Heart right ventricle (tissue), 16 donors: ENCODE measurements at regions of chr6 and their contacts with region 1.

Region 1: DNA sequence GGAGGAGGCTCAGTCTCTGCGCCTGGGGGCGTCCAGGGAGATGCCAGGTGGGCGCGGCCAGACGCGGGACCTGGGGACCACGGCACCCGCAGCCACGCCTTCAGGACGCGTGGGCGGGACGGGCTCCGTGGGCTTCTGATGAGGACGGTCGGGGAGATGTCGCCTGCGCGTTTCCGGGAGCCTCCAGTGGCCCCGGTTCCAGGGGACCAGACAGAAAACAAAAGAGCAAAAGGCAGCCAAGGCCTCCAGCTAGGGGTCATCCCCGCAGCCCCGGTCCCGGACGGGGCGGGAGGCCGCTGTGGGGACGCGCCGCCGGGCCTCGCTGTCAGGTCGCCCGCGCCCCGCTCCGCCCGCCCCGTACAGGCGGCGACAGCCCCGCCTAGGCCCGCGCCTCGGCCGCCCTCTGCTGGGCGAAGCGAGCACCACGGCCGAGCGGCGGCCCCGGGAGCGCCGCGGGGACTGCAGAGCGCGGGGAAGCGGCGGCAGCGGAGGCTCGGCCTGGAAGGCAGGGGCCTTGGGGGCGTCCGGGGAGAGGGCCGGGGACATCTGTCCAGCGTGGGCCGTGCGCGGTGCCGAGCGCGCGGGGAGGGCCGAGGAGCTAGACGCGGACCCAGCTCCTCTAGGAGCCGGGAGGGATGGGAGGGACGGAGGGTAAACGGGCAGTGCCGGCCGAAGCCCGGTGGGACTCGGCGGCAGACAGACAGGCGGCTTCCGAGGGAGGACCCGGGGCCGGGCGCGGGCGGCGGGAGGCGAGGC is 48.7 kb downstream of the TMEM242 start:
- DNase-seq: peak; percentile 72 to 80
- ATAC-seq: peak; percentile 88 to 96 (median 96)
- H3K4me3 ChIP-seq: peak overlapping the region; percentile 46 to 72 (median 67)
- H3K27ac ChIP-seq: peak overlapping the region; percentile 58 to 89 (median 83)
- H3K4me1 ChIP-seq: peaks cover 0 to 37% (median 7%) of the 10 kb centered on the region in 9 donors
- H3K27me3 ChIP-seq: no peaks in the 10 kb centered on the region
- CTCF ChIP-seq: peak; percentile 55 to 95 (median 90)

Region 2: DNA sequence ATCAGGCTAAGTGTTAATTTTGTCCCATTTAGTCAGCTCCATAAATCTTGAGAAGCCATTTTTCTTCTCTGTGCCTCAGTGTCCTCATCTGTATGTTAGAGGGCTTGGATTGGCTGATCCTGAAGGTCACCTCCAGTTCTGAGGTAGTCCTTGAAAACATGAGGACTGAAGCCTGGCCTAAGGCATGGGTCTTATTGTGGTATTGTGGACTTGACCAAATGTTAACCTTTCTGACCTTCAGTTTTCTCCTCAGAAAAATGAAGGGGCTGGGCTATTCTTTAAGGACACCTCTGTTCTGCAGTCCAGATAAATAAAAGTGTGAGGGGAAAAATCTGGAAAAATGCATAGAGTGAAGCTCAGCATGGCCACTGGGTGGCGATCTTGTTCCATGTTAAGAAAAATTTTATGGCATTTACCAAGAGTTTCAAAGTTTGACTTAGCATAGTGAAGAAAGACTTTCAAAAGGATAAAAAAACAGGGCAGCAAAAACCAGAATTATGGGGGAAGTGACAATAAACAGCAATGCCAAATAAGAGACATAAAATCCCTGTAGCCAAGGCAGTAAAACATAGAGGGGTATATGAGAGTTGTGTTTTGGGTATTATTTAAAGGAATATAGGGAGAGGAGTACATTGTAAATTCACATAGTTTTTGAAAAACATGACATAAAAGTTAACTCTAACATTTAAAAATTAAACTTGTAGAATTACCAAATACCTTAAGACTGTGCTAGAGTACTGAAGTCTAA is 1947.1 kb before region 1 on chr6:
- intact Hi-C with region 1: loop called in 1 of 10 experiments (anchors 10 kb)
- DNase-seq: peak; percentile 34 to 46
- ATAC-seq: peak in 6 of 8 donors; percentile 38 to 66 (median 60)
- H3K4me3 ChIP-seq: no peak overlapping the region
- H3K27ac ChIP-seq: no peak overlapping the region
- H3K4me1 ChIP-seq: no peaks in the 10 kb centered on the region
- H3K27me3 ChIP-seq: no peaks in the 10 kb centered on the region
- CTCF ChIP-seq: peak; percentile 63 to 89 (median 82)

Region 3: DNA sequence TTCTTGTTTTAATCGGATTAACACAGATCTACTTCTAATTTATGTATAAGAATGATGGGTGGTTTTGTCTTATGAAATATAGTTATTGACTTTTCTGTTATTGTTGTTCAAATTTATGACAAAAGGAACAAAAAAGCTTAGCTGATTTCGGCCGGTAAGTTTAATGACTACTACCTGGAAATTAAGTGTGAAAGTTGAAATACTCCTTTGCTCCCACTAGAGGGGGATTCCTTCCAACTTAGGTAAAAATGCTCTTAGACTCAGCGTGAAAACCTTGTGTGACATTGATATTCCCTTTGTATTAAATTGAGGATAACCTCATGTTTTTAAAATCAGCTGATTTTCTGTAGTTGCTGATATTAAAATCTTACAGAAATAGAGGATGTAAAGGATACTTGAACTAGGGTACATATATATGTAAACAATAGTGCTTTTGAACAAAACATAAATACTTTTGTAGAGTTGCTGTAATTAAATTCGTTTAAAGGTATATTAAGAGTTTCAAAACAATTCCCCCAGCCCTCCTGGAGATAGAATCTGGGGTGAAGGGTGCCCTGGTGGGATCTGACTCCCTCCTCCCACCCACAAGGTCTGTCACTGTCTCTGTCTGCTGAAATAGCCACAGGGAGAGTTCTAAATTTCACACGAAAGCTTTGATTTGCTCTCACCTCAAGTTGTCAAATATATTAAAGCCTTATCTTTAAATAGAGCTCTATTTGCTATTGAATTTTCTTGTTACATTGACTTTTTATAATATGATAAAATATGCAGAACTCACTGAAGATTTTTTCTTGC is 240.0 kb before region 1 on chr6:
- intact Hi-C with region 1: loop called in 7 of 10 experiments (anchors 5 to 10 kb)
- DNase-seq: no peak
- ATAC-seq: peak in 5 of 8 donors; percentile 55 to 76 (median 67)
- H3K4me3 ChIP-seq: no peak overlapping the region
- H3K27ac ChIP-seq: peak overlapping the region in 4 of 10 donors; percentile 29 to 86 (median 72)
- H3K4me1 ChIP-seq: peaks cover 0 to 52% (median 44%) of the 10 kb centered on the region in 9 donors
- H3K27me3 ChIP-seq: no peaks in the 10 kb centered on the region
- CTCF ChIP-seq: peak; percentile 37 to 76 (median 65)

Region 4: DNA sequence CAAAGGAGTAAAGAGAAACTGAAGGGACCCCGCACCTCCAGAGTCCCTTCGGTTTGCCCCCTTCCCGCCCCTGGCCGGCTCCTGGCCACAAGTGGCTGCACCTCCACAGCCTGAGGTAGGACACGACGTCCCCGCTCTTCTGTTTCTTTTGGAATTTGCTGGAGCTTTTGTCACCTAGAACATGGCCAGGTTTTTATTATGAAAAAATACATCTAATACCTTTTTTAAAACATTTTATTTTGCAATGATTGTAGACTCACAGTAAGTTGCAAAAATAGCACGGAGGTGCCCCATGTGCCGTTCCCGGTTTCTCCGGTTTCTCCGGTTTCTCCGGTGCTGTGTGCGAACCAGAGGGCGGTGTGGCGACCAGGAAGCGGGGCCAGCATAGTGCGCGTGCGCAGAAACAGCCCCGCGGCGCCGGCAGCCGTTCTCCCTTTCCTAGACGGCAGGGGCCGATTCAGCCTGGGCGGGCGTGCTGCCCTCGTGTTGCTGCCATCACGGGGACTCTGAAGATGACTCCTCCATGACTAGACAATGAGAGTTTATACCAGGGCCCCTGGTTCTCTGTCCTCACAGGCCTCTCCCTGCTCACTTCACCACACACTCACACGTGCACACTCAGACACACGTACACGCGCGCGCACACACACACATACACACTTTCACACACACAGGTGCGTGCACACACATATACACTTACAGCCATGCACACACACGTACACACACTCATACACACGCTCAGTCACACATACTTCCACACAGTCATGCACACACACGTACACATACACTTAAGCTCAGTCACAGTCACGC is 53.4 kb before region 1 on chr6:
- intact Hi-C with region 1: loop called in 6 of 10 experiments (anchors 2 to 10 kb)
- DNase-seq: peak; percentile 73 to 85
- ATAC-seq: peak; percentile 69 to 86 (median 80)
- H3K4me3 ChIP-seq: peak overlapping the region in 9 of 10 donors; percentile 20 to 60 (median 50)
- H3K27ac ChIP-seq: peak overlapping the region in 4 of 10 donors; percentile 8 to 39 (median 26)
- H3K4me1 ChIP-seq: peaks cover 0 to 34% (median 17%) of the 10 kb centered on the region in 9 donors
- H3K27me3 ChIP-seq: no peaks in the 10 kb centered on the region
- CTCF ChIP-seq: peak in 6 of 9 donors; percentile 6 to 61 (median 37)

Region 5: DNA sequence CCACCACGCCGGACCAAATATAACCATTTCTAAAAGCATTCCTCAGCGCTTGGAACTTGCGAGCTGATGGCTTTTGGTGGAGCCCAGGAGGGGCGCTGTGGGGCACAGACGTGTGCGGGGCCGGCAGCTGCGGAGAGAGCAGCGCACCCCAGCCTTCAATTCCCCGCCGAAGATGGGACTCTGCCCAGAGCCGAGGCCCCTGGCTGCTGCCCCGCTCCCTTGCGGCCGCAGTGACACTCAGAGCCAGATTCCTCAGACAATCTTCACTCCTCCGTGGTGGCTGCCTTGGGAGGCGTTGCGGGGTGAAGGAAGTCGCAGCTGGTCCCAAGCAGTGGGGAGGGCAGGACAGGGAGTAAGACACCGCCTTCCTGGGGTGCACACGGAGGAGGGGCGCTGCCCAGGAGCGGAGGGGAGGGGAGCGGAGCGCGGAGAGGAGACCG is 39.0 kb before region 1 on chr6:
- intact Hi-C with region 1: loop called in 4 of 10 experiments (anchors 1 to 5 kb)
- DNase-seq: peak; percentile 58 to 59
- ATAC-seq: peak; percentile 74 to 91 (median 78)
- H3K4me3 ChIP-seq: peak overlapping the region; percentile 41 to 64 (median 59)
- H3K27ac ChIP-seq: peak overlapping the region in 9 of 10 donors; percentile 18 to 65 (median 40)
- H3K4me1 ChIP-seq: peaks cover 3 to 37% (median 28%) of the 10 kb centered on the region in 9 donors
- H3K27me3 ChIP-seq: peaks cover 0 to 37% (median 0%) of the 10 kb centered on the region in 7 donors
- CTCF ChIP-seq: peak; percentile 22 to 80 (median 64)

Region 6: DNA sequence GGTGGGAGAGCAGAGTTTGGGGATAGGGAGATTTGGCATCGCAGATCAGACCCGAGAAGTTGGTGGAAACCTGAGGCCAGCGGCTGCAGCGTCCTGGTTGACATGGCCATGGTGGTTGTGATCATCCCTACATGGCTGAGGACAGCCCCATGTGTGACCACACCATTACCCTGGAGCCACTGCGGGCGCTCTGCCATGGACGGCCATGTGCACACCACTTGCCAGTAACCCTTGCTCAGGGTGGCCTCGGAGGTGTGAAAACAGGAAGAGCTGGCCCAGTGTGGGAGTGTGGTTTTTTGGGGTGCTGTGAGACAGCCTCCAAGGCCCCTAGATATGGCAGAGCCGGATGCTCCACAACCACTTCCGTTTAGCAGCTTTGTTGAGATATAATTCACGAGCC is 15.8 kb before region 1 on chr6:
- intact Hi-C with region 1: no loop called
- DNase-seq: no peak
- ATAC-seq: no peak
- H3K4me3 ChIP-seq: no peak overlapping the region
- H3K27ac ChIP-seq: no peak overlapping the region
- H3K4me1 ChIP-seq: peaks cover 0 to 14% (median 8%) of the 10 kb centered on the region in 9 donors
- H3K27me3 ChIP-seq: no peaks in the 10 kb centered on the region
- CTCF ChIP-seq: no peak

Region 7: DNA sequence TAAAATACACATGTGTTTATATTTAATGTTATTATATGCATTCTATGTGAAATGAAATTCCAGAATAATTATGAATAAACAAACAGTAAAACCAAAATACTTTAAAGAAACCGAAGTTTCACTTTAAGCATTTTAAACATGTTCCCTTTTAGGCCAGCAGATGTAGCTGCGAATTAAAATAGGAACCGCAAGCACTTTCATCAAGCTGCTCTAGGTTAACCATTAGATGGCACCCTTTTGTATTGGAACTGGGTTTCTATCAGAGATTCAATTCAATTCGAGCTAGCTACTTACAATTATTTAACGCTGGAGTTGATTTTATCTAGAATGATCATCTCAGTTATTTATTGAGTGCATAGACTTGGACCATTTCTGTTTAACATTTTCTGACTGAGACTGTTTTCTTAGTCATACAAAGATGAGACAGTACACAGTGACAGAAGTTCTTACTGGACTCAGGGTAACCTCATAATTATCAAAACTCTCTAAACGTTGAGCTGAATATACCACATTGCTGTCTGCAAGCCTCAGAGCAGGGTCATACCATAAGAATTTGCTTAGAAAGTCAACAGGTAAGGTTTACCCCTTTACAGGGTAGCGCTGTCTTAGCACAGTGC is 40.2 kb after region 1 on chr6:
- intact Hi-C with region 1: no loop called
- DNase-seq: no peak
- ATAC-seq: peak in 7 of 8 donors; percentile 56 to 85 (median 69)
- H3K4me3 ChIP-seq: no peak overlapping the region
- H3K27ac ChIP-seq: peak overlapping the region in 3 of 10 donors; percentile 13 to 46 (median 26)
- H3K4me1 ChIP-seq: peaks cover 0 to 37% (median 24%) of the 10 kb centered on the region in 9 donors
- H3K27me3 ChIP-seq: no peaks in the 10 kb centered on the region
- CTCF ChIP-seq: peak; percentile 56 to 97 (median 85)

Region 8: DNA sequence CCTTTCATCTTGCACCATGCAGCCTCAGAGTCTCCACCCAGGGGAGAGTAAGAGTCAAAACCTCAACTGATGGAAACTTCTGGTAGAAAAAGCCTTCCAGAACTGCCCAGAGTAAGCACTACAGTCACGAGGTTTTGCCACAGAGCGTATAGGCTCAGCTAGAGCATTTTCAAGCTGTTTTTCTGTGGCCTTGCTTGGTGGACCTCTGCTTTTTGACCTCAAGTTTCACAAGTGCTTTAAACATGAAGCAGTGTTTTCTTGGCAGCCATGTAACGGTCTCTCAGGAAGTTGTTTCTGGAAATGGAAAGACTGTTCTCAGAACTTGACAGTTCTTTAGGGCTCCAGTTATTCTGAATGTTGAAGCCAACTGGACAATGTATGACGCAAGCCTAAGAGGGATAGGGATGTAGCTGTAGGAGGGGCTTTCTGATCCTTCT is 252.8 kb after region 1 on chr6:
- intact Hi-C with region 1: no loop called
- DNase-seq: peak in 1 of 2 donors; percentile 51
- ATAC-seq: peak; percentile 55 to 85 (median 78)
- H3K4me3 ChIP-seq: no peak overlapping the region
- H3K27ac ChIP-seq: peak overlapping the region in 7 of 10 donors; percentile 2 to 69 (median 45)
- H3K4me1 ChIP-seq: peaks cover 0 to 29% (median 11%) of the 10 kb centered on the region in 9 donors
- H3K27me3 ChIP-seq: no peaks in the 10 kb centered on the region
- CTCF ChIP-seq: peak in 1 of 9 donors; percentile 10